GM10248 (cell line): ENCODE measurements at regions of chr5 and their contacts with region 1.

Region 1: DNA sequence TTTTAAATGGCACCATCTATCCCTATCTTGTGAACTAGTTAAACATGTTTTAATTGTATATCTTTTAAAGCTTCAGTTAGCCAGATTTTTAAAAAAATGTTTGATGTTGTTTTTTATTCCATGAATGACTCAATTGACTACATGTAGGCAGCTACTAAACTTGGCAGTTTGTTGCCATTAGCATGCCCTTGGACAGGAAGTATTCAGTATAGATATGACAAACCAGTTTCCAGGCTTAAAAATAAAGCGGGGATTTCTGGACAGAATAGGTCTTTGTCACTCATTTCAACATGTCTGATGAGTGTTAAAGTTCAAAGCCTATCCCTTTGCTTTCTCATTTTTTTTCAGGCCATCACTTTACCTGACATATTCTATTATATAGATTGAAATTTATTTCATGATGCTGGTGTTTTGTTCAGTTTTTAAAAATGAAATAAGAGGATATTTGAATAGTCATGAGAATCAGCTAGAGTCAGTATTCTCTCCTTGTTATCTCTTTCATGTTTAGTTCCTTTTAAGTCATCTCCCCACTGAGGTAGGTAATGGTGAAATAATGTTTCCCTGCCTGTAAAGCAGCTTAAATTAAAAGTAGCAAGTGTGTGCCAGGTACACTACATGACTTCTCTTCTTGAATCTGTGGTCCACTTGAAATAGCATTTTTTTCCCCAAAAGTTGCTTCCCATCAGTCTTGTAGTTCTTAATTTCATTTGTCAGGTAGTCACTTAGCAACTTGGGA is 11.9 kb downstream of the TNFAIP8 start:
- DNase-seq: no peak
- CTCF ChIP-seq: no peak

Region 2: GRCh38 chr5:119243898-119244297 is 123.8 kb before region 1 on chr5:
- CTCF ChIA-PET with region 1: no interaction called
- POLR2A ChIA-PET with region 1: no interaction called
- DNase-seq: no peak
- CTCF ChIP-seq: no peak

Region 3: DNA sequence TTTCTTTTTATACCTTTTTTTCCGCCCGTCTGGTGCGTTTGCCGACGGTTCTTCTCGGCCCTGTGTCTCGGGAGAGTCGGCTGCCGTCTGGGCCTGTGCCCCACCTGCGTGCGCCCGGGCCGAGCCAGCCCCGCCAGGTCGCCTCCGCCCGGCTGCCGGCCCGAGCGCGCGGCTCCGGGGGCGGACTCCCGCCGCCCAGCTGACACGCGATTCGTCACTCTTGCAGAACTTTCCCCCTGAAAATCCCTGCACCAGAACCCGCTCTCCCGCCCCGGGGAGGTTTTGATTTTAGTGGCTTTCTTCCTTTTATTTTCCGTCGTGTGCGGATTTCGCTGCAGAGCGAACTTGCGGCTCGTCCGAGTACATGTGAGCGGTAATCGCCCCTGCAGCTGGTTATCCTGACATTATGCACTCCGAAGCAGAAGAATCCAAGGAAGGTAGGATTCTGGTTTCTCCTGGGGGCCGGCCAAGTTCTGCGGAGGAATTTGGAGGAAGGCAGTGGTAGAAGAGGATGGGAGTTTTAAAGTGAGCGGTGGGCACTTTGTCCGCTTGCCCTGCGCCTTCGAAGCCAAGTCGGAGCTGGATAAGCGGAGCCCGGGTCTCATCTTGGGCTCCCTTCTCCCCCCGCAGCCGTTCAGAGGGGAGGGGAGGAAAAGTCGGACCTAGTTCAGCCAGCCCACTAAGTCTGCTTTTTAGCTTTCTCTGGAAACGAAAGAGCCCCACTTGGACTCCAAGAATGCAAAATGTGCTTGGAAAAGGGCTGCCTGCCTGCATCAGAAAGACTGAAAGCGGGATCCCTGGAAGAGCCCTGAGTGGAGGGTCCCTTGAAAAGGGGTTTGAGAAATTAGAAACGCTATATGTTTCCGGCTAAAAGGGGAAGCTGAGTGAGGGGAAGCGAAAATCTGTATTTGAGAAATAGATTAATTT is 11.7 kb before region 1 on chr5 and contains the start of gene TNFAIP8:
- CTCF ChIA-PET with region 1: interaction called, 31 read pairs
- POLR2A ChIA-PET with region 1: interaction called, 3 read pairs
- DNase-seq: peak; percentile 81
- CTCF ChIP-seq: no peak